HCT116 (cell line): ENCODE measurements at regions of chr1 and their contacts with region 1.

Region 1: DNA sequence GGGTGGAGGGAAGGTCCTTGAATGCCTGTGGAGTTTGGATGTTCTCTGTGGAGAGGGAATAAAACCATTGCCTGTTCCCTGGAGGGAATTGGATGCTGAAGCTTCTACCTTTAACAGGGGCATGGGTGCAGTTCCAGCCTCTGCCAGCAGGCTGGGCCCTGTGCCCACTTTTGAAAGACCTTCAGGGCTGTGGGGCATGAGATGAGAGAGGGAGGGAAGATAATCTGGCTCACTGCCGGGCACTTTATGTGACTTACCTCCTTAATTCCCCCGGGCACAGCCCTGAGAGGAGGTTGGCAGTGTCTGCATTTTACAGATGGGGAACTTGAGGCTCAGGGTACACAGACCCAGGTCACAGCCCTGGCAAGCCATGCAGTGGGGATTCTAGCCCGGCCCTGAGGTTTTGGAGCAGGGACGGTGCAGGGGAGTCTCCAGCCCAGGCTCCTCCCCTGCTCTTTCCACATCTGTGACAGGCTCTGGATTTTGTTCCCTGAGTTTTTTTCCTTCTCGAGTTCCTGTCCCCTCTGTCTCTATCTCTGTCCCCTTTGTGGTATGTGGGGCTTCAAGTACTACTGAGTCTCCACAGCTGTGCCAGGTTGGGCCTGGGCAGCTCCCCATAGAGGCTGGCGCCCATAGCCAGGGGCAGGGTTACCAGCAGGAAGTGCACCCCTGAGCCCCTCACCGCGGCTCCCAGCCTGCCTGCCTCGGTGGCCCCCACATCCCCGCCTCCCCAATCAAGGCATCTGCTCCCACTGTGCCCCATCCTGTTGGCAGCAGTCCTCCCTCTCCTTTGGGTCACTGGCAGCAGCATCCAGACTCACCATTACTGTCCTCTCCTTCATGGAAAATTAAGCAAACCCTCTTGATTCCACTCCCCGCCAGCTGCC is 14.0 kb upstream of the THEMIS2 start:
- DNase-seq: peak; percentile 56
- ATAC-seq: peak; percentile 95
- H3K4me3 ChIP-seq: no peak overlapping the region
- H3K27ac ChIP-seq: no peak overlapping the region
- H3K4me1 ChIP-seq: peaks cover 0 to 9% of the 10 kb centered on the region in 2 experiments; a peak in 2 of 4 replicates
- H3K27me3 ChIP-seq: no peaks in the 10 kb centered on the region
- CTCF ChIP-seq: peak; percentile 88 to 99 (median 98)
- POLR2A ChIP-seq: no peak
- RAD21 ChIP-seq: peak; percentile 98

Region 2: DNA sequence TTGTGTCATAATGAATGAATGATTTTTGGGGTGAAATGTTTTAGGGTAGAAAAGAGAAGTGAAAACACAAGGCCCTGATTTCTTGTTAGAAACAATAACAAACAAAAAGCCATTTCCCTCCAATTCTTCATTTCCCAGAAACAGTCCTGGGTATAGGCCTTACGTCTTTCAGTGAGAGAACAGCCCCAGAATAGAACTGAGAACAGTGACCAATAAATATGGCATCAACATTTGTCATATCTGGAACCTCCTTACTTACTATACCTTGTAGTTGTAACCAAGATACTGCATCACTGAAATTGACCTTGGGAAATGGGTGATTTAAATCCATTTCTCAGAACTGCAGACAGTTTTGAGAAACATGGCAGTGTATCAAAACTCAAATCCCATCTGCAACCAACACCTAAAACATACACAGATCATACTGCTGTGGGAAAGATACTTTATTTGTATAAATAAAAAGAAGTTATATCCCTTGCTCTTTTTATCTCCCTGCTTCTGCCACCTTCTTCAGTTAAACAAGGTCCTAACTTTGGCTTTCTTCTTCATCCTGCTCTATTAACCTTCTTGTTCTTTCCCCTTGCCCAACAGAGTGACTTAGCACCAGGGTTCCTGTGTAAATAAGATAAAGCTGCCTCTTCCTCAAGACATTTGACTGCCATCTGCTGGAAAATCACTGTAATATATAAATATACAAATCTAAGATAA is 121.0 kb after region 1 on chr1:
- CTCF ChIA-PET with region 1: interaction called, 12 read pairs
- POLR2A ChIA-PET with region 1: no interaction called
- RAD21 ChIA-PET with region 1: interaction called in 1 of 2 experiments, 3 read pairs
- intact Hi-C with region 1: loop called (anchors 1 kb)
- DNase-seq: peak; percentile 35
- ATAC-seq: peak; percentile 87
- H3K4me3 ChIP-seq: no peak overlapping the region
- H3K27ac ChIP-seq: no peak overlapping the region
- H3K4me1 ChIP-seq: no peaks in the 10 kb centered on the region
- H3K27me3 ChIP-seq: no peaks in the 10 kb centered on the region
- CTCF ChIP-seq: peak; percentile 34 to 87 (median 52); a peak in 5 of 6 replicates
- POLR2A ChIP-seq: no peak
- RAD21 ChIP-seq: peak; percentile 90

Region 3: GRCh38 chr1:28208818-28209441 is 350.6 kb after region 1 on chr1:
- CTCF ChIA-PET with region 1: interaction called, 4 read pairs
- POLR2A ChIA-PET with region 1: no interaction called
- RAD21 ChIA-PET with region 1: interaction called in 1 of 2 experiments, 4 read pairs
- intact Hi-C with region 1: loop called (anchors 2 kb)
- DNase-seq: peak; percentile 58
- ATAC-seq: peak; percentile 90
- H3K4me3 ChIP-seq: no peak overlapping the region
- H3K27ac ChIP-seq: no peak overlapping the region
- H3K4me1 ChIP-seq: no peaks in the 10 kb centered on the region
- H3K27me3 ChIP-seq: no peaks in the 10 kb centered on the region
- CTCF ChIP-seq: peak; percentile 66 to 89 (median 77)
- POLR2A ChIP-seq: no peak
- RAD21 ChIP-seq: peak; percentile 95